ENCODE measurements at regions of chr19 and their contacts with region 1.

Region 1: DNA sequence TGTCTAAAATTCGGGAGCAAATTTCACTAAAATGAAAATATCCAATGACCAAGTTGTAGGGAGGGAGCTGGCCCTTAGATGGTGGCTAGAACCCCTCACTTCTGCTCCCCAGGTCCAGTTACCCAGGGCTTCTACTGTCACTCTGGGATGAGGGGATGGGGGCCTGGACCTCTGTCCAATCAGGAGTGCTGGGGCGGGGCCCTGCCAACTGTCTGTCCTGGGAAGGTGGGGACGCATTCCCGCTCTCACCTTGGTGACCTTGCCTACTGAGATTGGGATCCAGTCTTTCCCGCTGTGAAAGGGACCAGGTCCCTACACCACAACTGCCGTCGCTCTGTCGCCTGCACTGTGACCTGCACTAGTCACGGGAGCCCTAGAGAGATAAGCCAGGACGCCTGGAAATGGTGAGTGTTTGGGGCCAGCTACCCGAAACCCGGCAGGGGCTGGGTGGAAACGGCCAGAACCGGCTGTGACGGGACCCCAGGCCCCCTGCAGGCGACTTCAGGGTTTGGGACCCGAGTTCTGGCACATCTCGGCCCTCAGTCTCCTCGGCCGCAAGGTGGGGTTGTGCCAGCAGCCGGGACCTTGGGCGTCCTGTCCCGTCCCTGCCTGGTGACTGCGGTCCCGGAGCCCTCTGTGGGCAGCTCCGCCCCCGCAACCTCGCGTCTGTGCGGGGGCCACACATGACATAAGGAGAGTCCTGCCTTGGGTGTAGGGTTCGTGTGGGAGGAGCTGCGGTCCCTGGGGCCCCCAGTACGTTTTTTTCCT is 22.8 kb downstream of the ZNF20 start:
- DNase-seq: no peak
- H3K4me3 ChIP-seq: no peak overlapping the region
- H3K27ac ChIP-seq: no peak overlapping the region
- H3K4me1 ChIP-seq: no peaks in the 10 kb centered on the region
- H3K27me3 ChIP-seq: peaks cover 27% of the 10 kb centered on the region
- CTCF ChIP-seq: no peak

Region 2: DNA sequence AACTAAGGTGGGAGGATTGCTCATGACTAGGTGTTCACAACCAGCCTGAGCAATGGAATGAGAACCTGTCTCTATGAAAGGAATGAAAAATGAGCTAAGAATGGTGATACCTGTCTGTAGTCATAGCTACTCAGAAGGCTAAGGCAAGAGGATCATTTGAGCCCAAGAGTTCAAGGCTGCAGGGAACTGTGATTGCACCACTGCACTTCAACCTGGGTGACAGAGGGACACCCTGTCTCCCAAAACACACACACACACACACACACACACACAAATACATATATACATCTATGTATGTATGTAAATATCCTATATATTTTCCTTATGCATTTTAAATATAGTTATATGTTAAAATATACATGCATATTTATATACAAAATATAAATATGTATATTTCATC is 74.5 kb before region 1 on chr19:
- CTCF ChIA-PET with region 1: no interaction called
- POLR2A ChIA-PET with region 1: interaction called, 21 read pairs
- intact Hi-C with region 1: no loop called
- DNase-seq: no peak
- H3K4me3 ChIP-seq: no peak overlapping the region
- H3K27ac ChIP-seq: no peak overlapping the region
- H3K4me1 ChIP-seq: no peaks in the 10 kb centered on the region
- H3K27me3 ChIP-seq: no peaks in the 10 kb centered on the region
- CTCF ChIP-seq: no peak